ENCODE measurements at regions of chr10 and their contacts with region 1.

Region 1: DNA sequence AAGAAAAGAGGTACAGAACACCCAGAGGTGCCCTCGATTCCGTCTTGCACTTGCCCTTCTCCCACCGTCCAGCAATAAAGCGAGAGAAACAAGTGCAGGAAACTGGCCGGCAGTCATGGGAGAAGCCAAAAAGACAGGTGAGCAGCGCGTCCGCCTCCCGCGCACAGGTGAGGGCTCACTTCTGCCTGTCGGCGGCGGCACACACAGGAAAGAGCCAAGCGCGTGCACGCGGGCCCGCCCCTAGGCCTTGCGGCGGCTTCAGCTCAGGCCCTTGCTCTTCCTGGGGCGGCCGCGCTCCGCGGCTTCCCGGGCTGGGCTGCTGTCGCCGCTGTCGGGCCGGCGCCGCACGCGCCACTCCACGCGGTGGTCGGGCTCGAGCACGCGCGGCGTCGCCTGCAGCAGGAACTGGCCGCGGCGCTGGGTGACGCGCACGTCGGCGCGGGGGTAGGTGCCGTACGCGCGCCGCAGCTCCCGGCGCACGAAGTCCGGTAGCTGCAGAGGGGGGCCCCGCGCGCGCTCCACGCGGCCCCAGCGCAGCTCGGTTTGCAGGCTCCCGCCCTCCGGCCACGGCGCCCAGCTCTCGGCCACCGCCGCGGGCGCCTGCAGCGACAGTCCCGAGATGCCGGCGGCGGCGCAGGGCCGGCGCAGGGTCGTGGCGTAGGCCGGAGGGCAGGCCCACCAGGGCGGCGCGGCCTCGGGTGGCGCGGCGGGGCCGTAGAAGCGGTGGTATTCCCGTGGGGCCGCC is 977 bp downstream of the C10orf95 start:
- DNase-seq: peak; percentile 93 to 96 (median 93)
- H3K4me3 ChIP-seq: peak overlapping the region; percentile 96
- H3K4me3 Mint-ChIP-seq: peak overlapping the region; percentile 90 to 96 (median 94)
- H3K27ac ChIP-seq: peak overlapping the region; percentile 79
- H3K27ac Mint-ChIP-seq: peak overlapping the region; percentile 81 to 97 (median 96)
- H3K4me1 ChIP-seq: peaks cover 23% of the 10 kb centered on the region
- H3K4me1 Mint-ChIP-seq: peaks cover 10 to 31% (median 23%) of the 10 kb centered on the region in 4 donors
- H3K27me3 ChIP-seq: no peaks in the 10 kb centered on the region
- H3K27me3 Mint-ChIP-seq: no peaks in the 10 kb centered on the region

Region 2: GRCh38 chr10:102408728-102409603 is 41.4 kb before region 1 on chr10:
- CTCF ChIA-PET with region 1: no interaction called
- POLR2A ChIA-PET with region 1: interaction called, 16 read pairs
- intact Hi-C with region 1: no loop called
- DNase-seq: peak; percentile 53 to 76 (median 64)
- H3K4me3 ChIP-seq: peak overlapping the region in 1 of 2 donors; percentile 43
- H3K4me3 Mint-ChIP-seq: peak overlapping the region; percentile 63 to 88 (median 80)
- H3K27ac ChIP-seq: peak overlapping the region; percentile 22
- H3K27ac Mint-ChIP-seq: peak overlapping the region in 3 of 7 donors; percentile 54 to 95 (median 72)
- H3K4me1 ChIP-seq: peaks cover 27% of the 10 kb centered on the region
- H3K4me1 Mint-ChIP-seq: peaks cover 14 to 65% (median 22%) of the 10 kb centered on the region in 4 donors
- H3K27me3 ChIP-seq: peaks cover 11% of the 10 kb centered on the region
- H3K27me3 Mint-ChIP-seq: peaks cover 16 to 33% of the 10 kb centered on the region in 2 donors

Region 3: DNA sequence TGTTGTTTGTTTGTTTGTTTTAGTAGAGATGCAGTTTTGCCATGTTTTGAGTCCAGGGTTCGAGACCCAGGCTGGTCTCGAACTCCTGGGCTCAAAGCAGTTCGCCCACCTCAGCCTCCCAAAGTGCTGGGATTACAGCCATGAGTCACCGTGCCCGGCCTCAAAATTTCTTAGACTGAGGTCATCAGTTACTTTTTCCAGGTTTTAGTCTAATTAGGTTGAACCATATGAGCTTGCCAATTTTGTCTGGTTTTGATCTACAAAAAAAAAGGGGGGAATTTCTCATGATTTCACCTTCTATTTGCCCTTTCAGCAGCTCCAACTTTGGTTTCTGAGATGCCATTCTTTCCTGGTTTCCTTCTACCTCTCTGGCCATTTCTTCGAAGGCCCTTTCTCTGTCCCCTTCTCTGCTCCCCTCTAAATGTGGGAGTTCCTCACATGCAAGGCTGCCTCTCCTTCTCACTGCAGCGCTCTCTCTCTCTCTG is 23.5 kb before region 1 on chr10:
- CTCF ChIA-PET with region 1: interaction called, 23 read pairs
- POLR2A ChIA-PET with region 1: interaction called, 186 read pairs
- intact Hi-C with region 1: loop called (anchors 1 kb)
- DNase-seq: no peak
- H3K4me3 ChIP-seq: no peak overlapping the region
- H3K4me3 Mint-ChIP-seq: peak overlapping the region in 1 of 8 donors; percentile 20
- H3K27ac ChIP-seq: no peak overlapping the region
- H3K27ac Mint-ChIP-seq: no peak overlapping the region
- H3K4me1 ChIP-seq: peaks cover 24% of the 10 kb centered on the region
- H3K4me1 Mint-ChIP-seq: peaks cover 11 to 32% (median 18%) of the 10 kb centered on the region in 4 donors
- H3K27me3 ChIP-seq: no peaks in the 10 kb centered on the region
- H3K27me3 Mint-ChIP-seq: no peaks in the 10 kb centered on the region

Region 4: GRCh38 chr10:102461187-102462054 is 11.1 kb after region 1 on chr10:
- CTCF ChIA-PET with region 1: interaction called, 22 read pairs
- POLR2A ChIA-PET with region 1: interaction called, 126 read pairs
- intact Hi-C with region 1: loop called (anchors 1 kb)
- DNase-seq: peak; percentile 90 to 91 (median 91)
- H3K4me3 ChIP-seq: peak overlapping the region; percentile 52 to 85
- H3K4me3 Mint-ChIP-seq: peak overlapping the region; percentile 83 to 95 (median 90)
- H3K27ac ChIP-seq: peak overlapping the region; percentile 70
- H3K27ac Mint-ChIP-seq: peak overlapping the region; percentile 75 to 95 (median 87)
- H3K4me1 ChIP-seq: peaks cover 16% of the 10 kb centered on the region
- H3K4me1 Mint-ChIP-seq: peaks cover 16 to 38% (median 23%) of the 10 kb centered on the region in 4 donors
- H3K27me3 ChIP-seq: no peaks in the 10 kb centered on the region
- H3K27me3 Mint-ChIP-seq: no peaks in the 10 kb centered on the region

Region 5: GRCh38 chr10:102523250-102524029 is 73.1 kb after region 1 on chr10:
- CTCF ChIA-PET with region 1: no interaction called
- POLR2A ChIA-PET with region 1: no interaction called
- intact Hi-C with region 1: no loop called
- DNase-seq: no peak
- H3K4me3 ChIP-seq: no peak overlapping the region
- H3K4me3 Mint-ChIP-seq: no peak overlapping the region
- H3K27ac ChIP-seq: no peak overlapping the region
- H3K27ac Mint-ChIP-seq: peak overlapping the region in 4 of 7 donors; percentile 5 to 61 (median 31)
- H3K4me1 ChIP-seq: no peaks in the 10 kb centered on the region
- H3K4me1 Mint-ChIP-seq: peaks cover 5 to 24% (median 21%) of the 10 kb centered on the region in 4 donors
- H3K27me3 ChIP-seq: no peaks in the 10 kb centered on the region
- H3K27me3 Mint-ChIP-seq: no peaks in the 10 kb centered on the region